HepG2 (cell line): ENCODE measurements at regions of chr11 and their contacts with region 1.

Region 1: GRCh38 chr11:120511116-120511819 is at the start of gene GRIK4:
- DNase-seq: peak; percentile 52
- ATAC-seq: peak; percentile 90
- H3K4me3 ChIP-seq: peak within 1 kb of the TSS; percentile 47 to 71 (median 49); a peak in 4 of 6 replicates
- H3K27ac ChIP-seq: no peak within 1 kb of the TSS
- H3K4me1 ChIP-seq: peaks cover 3% of the 10 kb centered on the region
- H3K27me3 ChIP-seq: peaks cover 4 to 75% of the 10 kb centered on the region in 2 experiments
- CTCF ChIP-seq: peak; percentile 96
- EP300 ChIP-seq: no peak
- POLR2A ChIP-seq: no peak
- RAD21 ChIP-seq: peak; percentile 98
- total RNA-seq, gene GRIK4: 0.04 TPM in 1 of 2 replicates, not detected in the other

Region 2: GRCh38 chr11:119854521-119854920 is 656.7 kb before region 1 on chr11:
- CTCF ChIA-PET with region 1: no interaction called
- POLR2A ChIA-PET with region 1: no interaction called
- in situ Hi-C with region 1: no loop called
- intact Hi-C with region 1: no loop called
- DNase-seq: no peak
- ATAC-seq: peak; percentile 60
- H3K4me3 ChIP-seq: no peak overlapping the region
- H3K27ac ChIP-seq: no peak overlapping the region
- H3K4me1 ChIP-seq: no peaks in the 10 kb centered on the region
- H3K27me3 ChIP-seq: peaks cover 3 to 35% of the 10 kb centered on the region in 2 experiments; a peak in 2 of 5 replicates
- CTCF ChIP-seq: no peak
- EP300 ChIP-seq: no peak
- POLR2A ChIP-seq: no peak
- RAD21 ChIP-seq: no peak

Region 3: GRCh38 chr11:120682866-120683265 is 171.6 kb after region 1 on chr11:
- CTCF ChIA-PET with region 1: interaction called, 33 read pairs
- POLR2A ChIA-PET with region 1: no interaction called
- in situ Hi-C with region 1: loop called (anchors 5 kb)
- intact Hi-C with region 1: loop called (anchors 1 kb)
- DNase-seq: no peak
- ATAC-seq: no peak
- H3K4me3 ChIP-seq: no peak overlapping the region
- H3K27ac ChIP-seq: no peak overlapping the region
- H3K4me1 ChIP-seq: peaks cover 12% of the 10 kb centered on the region; the same call in 1 of the 2 replicates
- H3K27me3 ChIP-seq: no peaks in the 10 kb centered on the region
- CTCF ChIP-seq: no peak
- EP300 ChIP-seq: no peak
- POLR2A ChIP-seq: no peak
- RAD21 ChIP-seq: no peak

Region 4: DNA sequence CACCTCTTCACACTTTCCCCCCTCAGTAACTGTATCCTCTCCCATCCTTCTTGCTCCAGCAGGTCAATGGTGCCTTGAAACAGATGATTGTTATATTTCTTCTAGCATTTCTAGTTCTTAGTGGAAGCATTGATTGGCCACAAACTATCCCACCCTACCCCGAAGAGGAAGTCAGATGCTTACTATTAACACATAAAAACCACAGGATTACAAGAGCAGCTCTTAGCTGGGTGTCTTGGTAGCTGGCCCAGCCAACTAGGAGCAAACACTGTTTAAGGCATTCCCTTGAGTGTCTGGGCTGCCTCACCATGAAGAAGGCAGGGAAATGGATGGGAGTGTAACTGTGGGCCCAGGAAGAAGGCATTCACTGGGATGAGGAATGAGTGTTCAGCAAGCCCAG is 176.9 kb after region 1 on chr11:
- CTCF ChIA-PET with region 1: interaction called, 33 read pairs
- POLR2A ChIA-PET with region 1: no interaction called
- in situ Hi-C with region 1: loop called (anchors 5 kb)
- intact Hi-C with region 1: loop called (anchors 1 kb)
- DNase-seq: no peak
- ATAC-seq: no peak
- H3K4me3 ChIP-seq: no peak overlapping the region
- H3K27ac ChIP-seq: no peak overlapping the region
- H3K4me1 ChIP-seq: no peaks in the 10 kb centered on the region
- H3K27me3 ChIP-seq: peaks cover 0 to 22% of the 10 kb centered on the region in 2 experiments; a peak in 1 of 5 replicates
- CTCF ChIP-seq: no peak
- EP300 ChIP-seq: no peak
- POLR2A ChIP-seq: no peak
- RAD21 ChIP-seq: no peak

Region 5: DNA sequence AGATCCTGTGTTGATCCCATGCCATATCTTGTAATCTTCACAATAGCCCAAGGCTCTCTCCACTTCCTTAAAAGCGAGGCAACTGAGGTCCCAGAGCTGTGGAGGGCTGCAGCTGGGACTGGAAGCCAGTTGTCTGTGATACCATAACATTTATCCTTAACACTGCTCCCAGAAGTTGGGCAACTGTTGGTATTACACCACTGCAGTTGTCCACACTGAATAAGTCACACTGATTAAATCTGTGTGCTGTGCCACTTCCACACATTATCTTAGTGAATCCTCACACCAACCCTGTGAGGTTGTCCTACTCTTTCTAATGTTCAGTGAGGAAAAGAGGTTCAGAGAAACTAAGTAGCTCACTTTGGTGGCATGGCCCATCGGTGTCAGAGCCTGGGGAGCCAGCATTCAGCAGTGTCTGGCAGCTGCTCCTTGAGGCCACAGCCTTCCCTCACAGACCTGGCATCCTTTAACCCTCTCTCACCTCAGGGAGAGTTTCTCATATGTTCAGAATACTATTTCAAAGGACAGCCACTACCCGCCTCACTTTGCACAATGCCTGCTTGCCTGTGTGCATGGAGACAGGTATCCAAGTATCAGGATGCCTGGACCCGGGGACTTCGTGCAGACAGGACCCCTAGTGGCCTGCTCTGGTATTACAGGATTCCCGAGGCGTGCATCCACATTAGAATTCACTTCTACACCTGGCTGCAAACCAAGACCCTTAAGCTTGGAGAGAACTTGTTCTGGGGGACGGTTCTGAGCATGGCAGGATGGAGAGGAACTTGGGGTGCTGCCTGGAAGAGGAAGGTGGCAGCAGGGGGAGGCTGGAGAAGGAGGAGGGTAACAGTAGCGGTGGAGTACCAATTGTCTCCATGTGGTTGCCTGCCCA is 290.8 kb after region 1 on chr11:
- CTCF ChIA-PET with region 1: interaction called, 5 read pairs
- POLR2A ChIA-PET with region 1: no interaction called
- in situ Hi-C with region 1: loop called (anchors 10 kb)
- intact Hi-C with region 1: loop called (anchors 10 kb)
- DNase-seq: peak; percentile 28
- ATAC-seq: peak; percentile 87
- H3K4me3 ChIP-seq: no peak overlapping the region
- H3K27ac ChIP-seq: no peak overlapping the region
- H3K4me1 ChIP-seq: peaks cover 21% of the 10 kb centered on the region
- H3K27me3 ChIP-seq: 0 out of 5 replicates have a peak, but pooled peaks cover 0 to 2% of the 10 kb centered on the region in 2 experiments
- CTCF ChIP-seq: peak; percentile 83
- EP300 ChIP-seq: no peak
- POLR2A ChIP-seq: no peak
- RAD21 ChIP-seq: peak; percentile 25; the same call in 1 of the 2 replicates

Region 6: DNA sequence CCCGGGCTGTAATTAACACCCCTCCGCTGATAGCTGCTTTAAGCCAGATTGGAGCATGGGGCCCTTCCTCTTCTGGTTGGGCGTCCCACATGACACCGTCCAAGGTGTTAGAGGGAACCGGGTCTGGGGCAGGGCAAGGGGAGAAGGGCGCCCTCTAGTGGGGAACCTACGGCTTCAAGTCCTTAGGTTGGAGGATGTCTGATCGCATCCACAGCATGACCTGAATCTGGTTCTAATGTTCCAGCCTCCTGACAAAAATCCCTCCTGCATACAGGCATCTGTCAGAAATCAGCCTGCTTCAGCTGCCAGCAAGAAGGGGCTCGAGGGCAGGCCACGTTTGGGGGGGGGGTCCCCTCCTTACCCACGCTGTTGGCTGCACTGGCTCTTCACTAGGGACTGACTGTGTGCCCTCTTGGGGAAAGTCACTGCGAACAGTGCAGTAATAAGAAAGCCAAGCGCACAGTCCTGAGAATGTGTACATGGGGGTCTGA is 418.4 kb after region 1 on chr11:
- CTCF ChIA-PET with region 1: interaction called, 6 read pairs
- POLR2A ChIA-PET with region 1: no interaction called
- in situ Hi-C with region 1: no loop called
- intact Hi-C with region 1: loop called (anchors 10 kb)
- DNase-seq: peak; percentile 30
- ATAC-seq: peak; percentile 86
- H3K4me3 ChIP-seq: no peak overlapping the region
- H3K27ac ChIP-seq: no peak overlapping the region
- H3K4me1 ChIP-seq: no peaks in the 10 kb centered on the region
- H3K27me3 ChIP-seq: no peaks in the 10 kb centered on the region
- CTCF ChIP-seq: peak; percentile 81
- EP300 ChIP-seq: no peak
- POLR2A ChIP-seq: no peak
- RAD21 ChIP-seq: no peak

Region 7: GRCh38 chr11:120952461-120953434 is 441.5 kb after region 1 on chr11:
- CTCF ChIA-PET with region 1: interaction called, 15 read pairs
- POLR2A ChIA-PET with region 1: no interaction called
- in situ Hi-C with region 1: loop called (anchors 5 kb)
- intact Hi-C with region 1: loop called (anchors 1 kb)
- DNase-seq: peak; percentile 64
- ATAC-seq: peak; percentile 91
- H3K4me3 ChIP-seq: peak overlapping the region in 1 of 3 experiments; percentile 17; a peak in 1 of 6 replicates
- H3K27ac ChIP-seq: no peak overlapping the region
- H3K4me1 ChIP-seq: no peaks in the 10 kb centered on the region
- H3K27me3 ChIP-seq: peaks cover 5 to 7% of the 10 kb centered on the region in 2 experiments; a peak in 2 of 5 replicates
- CTCF ChIP-seq: peak; percentile 80
- EP300 ChIP-seq: no peak
- POLR2A ChIP-seq: no peak
- RAD21 ChIP-seq: peak; percentile 57

Region 8: GRCh38 chr11:121112498-121113455 is 601.5 kb after region 1 on chr11:
- CTCF ChIA-PET with region 1: no interaction called
- POLR2A ChIA-PET with region 1: no interaction called
- in situ Hi-C with region 1: no loop called
- intact Hi-C with region 1: loop called (anchors 2 kb)
- DNase-seq: peak; percentile 52
- ATAC-seq: peak; percentile 95
- H3K4me3 ChIP-seq: no peak overlapping the region
- H3K27ac ChIP-seq: no peak overlapping the region
- H3K4me1 ChIP-seq: no peaks in the 10 kb centered on the region
- H3K27me3 ChIP-seq: peaks cover 0 to 18% of the 10 kb centered on the region in 2 experiments; a peak in 3 of 5 replicates
- CTCF ChIP-seq: peak; percentile 81
- EP300 ChIP-seq: no peak
- POLR2A ChIP-seq: no peak
- RAD21 ChIP-seq: peak; percentile 74